ENCODE measurements at regions of chr1 and their contacts with region 1.

Region 1: GRCh38 chr1:1890506-1891348 is at the start of gene GNB1:
- DNase-seq: peak; percentile 68 to 80
- ATAC-seq: peak; percentile 87 to 89
- H3K4me3 ChIP-seq: peak within 1 kb of the TSS; percentile 74 to 82 (median 80)
- H3K27ac ChIP-seq: peak within 1 kb of the TSS; percentile 87 to 97 (median 96)
- H3K4me1 ChIP-seq: peaks cover 49 to 63% of the 10 kb centered on the region in 2 donors
- H3K27me3 ChIP-seq: no peaks in the 10 kb centered on the region
- CTCF ChIP-seq: peak in 1 of 5 experiments; percentile 5
- POLR2A ChIP-seq: peak; percentile 72 to 75
- total RNA-seq, gene GNB1: 29.9 to 44.1 (median 37.2) TPM

Region 2: GRCh38 chr1:1763657-1764616 is 126.8 kb before region 1 on chr1:
- in situ Hi-C with region 1: loop called in 1 of 4 experiments (anchors 25 kb)
- intact Hi-C with region 1: no loop called
- DNase-seq: peak in 1 of 2 donors; percentile 75
- ATAC-seq: peak; percentile 39 to 83
- H3K4me3 ChIP-seq: no peak overlapping the region
- H3K27ac ChIP-seq: peak overlapping the region in 1 of 4 donors; percentile 25
- H3K4me1 ChIP-seq: peaks cover 0 to 6% of the 10 kb centered on the region in 2 donors
- H3K27me3 ChIP-seq: no peaks in the 10 kb centered on the region
- CTCF ChIP-seq: no peak
- POLR2A ChIP-seq: no peak

Region 3: GRCh38 chr1:1777950-1778662 is 112.6 kb before region 1 on chr1 and contains the start of gene NADK:
- in situ Hi-C with region 1: loop called in 2 of 4 experiments (anchors 10 to 25 kb)
- intact Hi-C with region 1: loop called (anchors 1 kb)
- DNase-seq: peak in 1 of 2 donors; percentile 59
- ATAC-seq: peak; percentile 82 to 83
- H3K4me3 ChIP-seq: peak within 1 kb of the TSS; percentile 79 to 95 (median 86)
- H3K27ac ChIP-seq: peak within 1 kb of the TSS; percentile 89 to 99 (median 94)
- H3K4me1 ChIP-seq: peaks cover 47 to 62% of the 10 kb centered on the region in 2 donors
- H3K27me3 ChIP-seq: no peaks in the 10 kb centered on the region
- CTCF ChIP-seq: peak in 1 of 5 experiments; percentile 24
- POLR2A ChIP-seq: peak; percentile 78 to 84
- total RNA-seq, gene NADK: 20.1 to 33.1 (median 32.5) TPM

Region 4: GRCh38 chr1:1858382-1859086 is 32.2 kb before region 1 on chr1:
- in situ Hi-C with region 1: no loop called
- intact Hi-C with region 1: loop called (anchors 5 kb)
- DNase-seq: peak; percentile 63 to 69
- ATAC-seq: peak; percentile 86 to 87
- H3K4me3 ChIP-seq: peak overlapping the region; percentile 19 to 39 (median 30)
- H3K27ac ChIP-seq: peak overlapping the region; percentile 69 to 76 (median 74)
- H3K4me1 ChIP-seq: peaks cover 60 to 69% of the 10 kb centered on the region in 2 donors
- H3K27me3 ChIP-seq: no peaks in the 10 kb centered on the region
- CTCF ChIP-seq: peak in 2 of 5 experiments; percentile 38 to 45
- POLR2A ChIP-seq: peak in 1 of 2 donors; percentile 35

Measured in gastrocnemius medialis (tissue), 4 donors.